ENCODE measurements at regions of chr6 and their contacts with region 1.

Region 1: GRCh38 chr6:52598123-52598823 is 21.4 kb upstream of the TRAM2 start:
- DNase-seq: peak; percentile 58 to 87
- H3K4me3 ChIP-seq: peak overlapping the region in 1 of 4 experiments; percentile 13; a peak in 1 of 8 replicates
- H3K27ac ChIP-seq: no peak overlapping the region
- H3K4me1 ChIP-seq: peaks cover 0 to 4% (median 2%) of the 10 kb centered on the region in 4 experiments; a peak in 5 of 7 replicates
- H3K27me3 ChIP-seq: no peaks in the 10 kb centered on the region; a peak in 1 of 7 replicates
- CTCF ChIP-seq: peak; percentile 70 to 98 (median 84)
- EP300 ChIP-seq: peak in 1 of 2 experiments; percentile 44; a peak in 1 of 3 replicates
- POLR2A ChIP-seq: peak in 1 of 2 experiments; percentile 54; a peak in 1 of 3 replicates
- RAD21 ChIP-seq: peak; percentile 66 to 76

Region 2: GRCh38 chr6:52498538-52499017 is 99.7 kb before region 1 on chr6:
- CTCF ChIA-PET with region 1: interaction called, 13 read pairs
- POLR2A ChIA-PET with region 1: interaction called, 3 read pairs
- DNase-seq: no peak
- H3K4me3 ChIP-seq: no peak overlapping the region
- H3K27ac ChIP-seq: no peak overlapping the region
- H3K4me1 ChIP-seq: peaks cover 0 to 6% (median 1%) of the 10 kb centered on the region in 4 experiments; a peak in 4 of 7 replicates
- H3K27me3 ChIP-seq: no peaks in the 10 kb centered on the region
- CTCF ChIP-seq: no peak
- EP300 ChIP-seq: no peak
- POLR2A ChIP-seq: no peak
- RAD21 ChIP-seq: no peak

Region 3: GRCh38 chr6:52577022-52577777 is 21.1 kb before region 1 on chr6 and contains the start of gene TRAM2:
- CTCF ChIA-PET with region 1: interaction called, 85 read pairs
- POLR2A ChIA-PET with region 1: interaction called, 17 read pairs
- DNase-seq: peak in 1 of 2 experiments; percentile 85
- H3K4me3 ChIP-seq: peak within 1 kb of the TSS; percentile 70 to 93 (median 86)
- H3K27ac ChIP-seq: peak within 1 kb of the TSS; percentile 86
- H3K4me1 ChIP-seq: peaks cover 14 to 28% (median 21%) of the 10 kb centered on the region in 4 experiments
- H3K27me3 ChIP-seq: no peaks in the 10 kb centered on the region
- CTCF ChIP-seq: peak in 1 of 3 experiments; percentile 20; a peak in 2 of 4 replicates
- EP300 ChIP-seq: no peak
- POLR2A ChIP-seq: peak; percentile 70 to 87
- RAD21 ChIP-seq: peak in 1 of 2 experiments; percentile 14; a peak in 1 of 4 replicates
- total RNA-seq, gene TRAM2: 21.4 and 21.6 TPM in 2 replicates

Region 4: GRCh38 chr6:52610016-52610415 is 11.7 kb after region 1 on chr6:
- CTCF ChIA-PET with region 1: interaction called, 30 read pairs
- POLR2A ChIA-PET with region 1: no interaction called
- DNase-seq: no peak
- H3K4me3 ChIP-seq: no peak overlapping the region
- H3K27ac ChIP-seq: no peak overlapping the region
- H3K4me1 ChIP-seq: no peaks in the 10 kb centered on the region
- H3K27me3 ChIP-seq: no peaks in the 10 kb centered on the region
- CTCF ChIP-seq: no peak
- EP300 ChIP-seq: no peak
- POLR2A ChIP-seq: no peak
- RAD21 ChIP-seq: no peak

Region 5: DNA sequence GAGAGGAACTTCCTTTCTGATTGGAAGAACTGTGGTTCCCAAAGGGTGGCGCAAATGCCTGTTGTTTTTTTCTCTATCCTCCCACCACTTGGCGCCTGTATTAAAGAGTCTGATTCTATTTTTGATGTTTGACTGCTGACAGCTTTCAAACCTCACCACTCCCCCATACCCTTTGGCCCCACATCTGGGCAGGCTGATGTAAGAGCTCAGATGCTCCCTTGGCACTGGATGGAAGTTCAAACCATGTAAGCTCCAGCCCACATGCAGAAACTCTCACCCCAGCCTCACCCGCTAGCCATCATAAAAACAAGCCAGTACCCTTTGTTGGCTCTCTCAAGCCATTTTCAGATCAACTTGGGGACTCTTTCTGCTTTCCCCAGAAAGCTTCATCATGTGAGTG is 52.7 kb after region 1 on chr6:
- CTCF ChIA-PET with region 1: interaction called, 18 read pairs
- POLR2A ChIA-PET with region 1: no interaction called
- DNase-seq: no peak
- H3K4me3 ChIP-seq: no peak overlapping the region
- H3K27ac ChIP-seq: no peak overlapping the region
- H3K4me1 ChIP-seq: peaks cover 0 to 3% (median 0%) of the 10 kb centered on the region in 4 experiments; a peak in 1 of 7 replicates
- H3K27me3 ChIP-seq: no peaks in the 10 kb centered on the region
- CTCF ChIP-seq: no peak
- EP300 ChIP-seq: no peak
- POLR2A ChIP-seq: no peak
- RAD21 ChIP-seq: no peak

Region 6: GRCh38 chr6:53090576-53090975 is 492.3 kb after region 1 on chr6:
- CTCF ChIA-PET with region 1: no interaction called
- POLR2A ChIA-PET with region 1: no interaction called
- DNase-seq: no peak
- H3K4me3 ChIP-seq: no peak overlapping the region
- H3K27ac ChIP-seq: no peak overlapping the region
- H3K4me1 ChIP-seq: no peaks in the 10 kb centered on the region; a peak in 1 of 7 replicates
- H3K27me3 ChIP-seq: no peaks in the 10 kb centered on the region
- CTCF ChIP-seq: no peak
- EP300 ChIP-seq: no peak
- POLR2A ChIP-seq: no peak
- RAD21 ChIP-seq: no peak

Region 7: GRCh38 chr6:54198134-54198533 is 1599.9 kb after region 1 on chr6:
- CTCF ChIA-PET with region 1: no interaction called
- POLR2A ChIA-PET with region 1: no interaction called
- DNase-seq: no peak
- H3K4me3 ChIP-seq: no peak overlapping the region
- H3K27ac ChIP-seq: no peak overlapping the region
- H3K4me1 ChIP-seq: peaks cover 0 to 5% (median 2%) of the 10 kb centered on the region in 4 experiments; a peak in 2 of 7 replicates
- H3K27me3 ChIP-seq: no peaks in the 10 kb centered on the region
- CTCF ChIP-seq: no peak
- EP300 ChIP-seq: no peak
- POLR2A ChIP-seq: no peak
- RAD21 ChIP-seq: no peak